Stomach (tissue), 19 donors: ENCODE measurements at regions of chr15 and their contacts with region 1.

Region 1: DNA sequence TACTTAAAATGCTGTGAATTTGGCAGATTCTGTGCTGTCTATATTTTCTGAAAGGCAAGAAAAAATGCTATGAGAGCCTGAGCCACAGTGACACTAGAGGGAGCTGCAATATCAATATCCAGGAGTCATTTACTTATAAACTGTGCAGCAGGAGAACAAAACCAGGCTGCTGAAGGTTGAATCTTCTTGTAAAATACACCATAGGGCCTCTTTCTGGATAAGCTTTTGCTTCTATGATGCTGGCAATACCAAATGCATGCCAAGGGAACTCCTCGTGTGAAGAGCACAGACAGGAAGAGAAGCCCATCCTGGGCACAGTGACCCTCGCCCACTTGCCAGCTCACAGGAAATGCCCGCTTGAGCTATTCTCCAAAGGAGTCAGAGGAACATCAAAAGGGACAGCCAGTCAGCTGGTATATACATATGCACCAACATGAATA is 48.0 kb upstream of the TSPAN3 start:
- DNase-seq: peak; percentile 40 to 91
- H3K4me3 ChIP-seq: no peak overlapping the region
- H3K27ac ChIP-seq: no peak overlapping the region
- H3K4me1 ChIP-seq: peaks cover 5 to 11% (median 6%) of the 10 kb centered on the region in 4 donors
- H3K27me3 ChIP-seq: no peaks in the 10 kb centered on the region
- CTCF ChIP-seq: peak in 5 of 7 experiments; percentile 48 to 76 (median 61)
- EP300 ChIP-seq: no peak
- POLR2A ChIP-seq: no peak

Region 2: GRCh38 chr15:77168616-77169015 is 49.7 kb after region 1 on chr15:
- intact Hi-C with region 1: no loop called
- DNase-seq: no peak
- H3K4me3 ChIP-seq: no peak overlapping the region
- H3K27ac ChIP-seq: no peak overlapping the region
- H3K4me1 ChIP-seq: peaks cover 3 to 16% (median 8%) of the 10 kb centered on the region in 4 donors
- H3K27me3 ChIP-seq: no peaks in the 10 kb centered on the region
- CTCF ChIP-seq: no peak
- EP300 ChIP-seq: no peak
- POLR2A ChIP-seq: no peak

Region 3: DNA sequence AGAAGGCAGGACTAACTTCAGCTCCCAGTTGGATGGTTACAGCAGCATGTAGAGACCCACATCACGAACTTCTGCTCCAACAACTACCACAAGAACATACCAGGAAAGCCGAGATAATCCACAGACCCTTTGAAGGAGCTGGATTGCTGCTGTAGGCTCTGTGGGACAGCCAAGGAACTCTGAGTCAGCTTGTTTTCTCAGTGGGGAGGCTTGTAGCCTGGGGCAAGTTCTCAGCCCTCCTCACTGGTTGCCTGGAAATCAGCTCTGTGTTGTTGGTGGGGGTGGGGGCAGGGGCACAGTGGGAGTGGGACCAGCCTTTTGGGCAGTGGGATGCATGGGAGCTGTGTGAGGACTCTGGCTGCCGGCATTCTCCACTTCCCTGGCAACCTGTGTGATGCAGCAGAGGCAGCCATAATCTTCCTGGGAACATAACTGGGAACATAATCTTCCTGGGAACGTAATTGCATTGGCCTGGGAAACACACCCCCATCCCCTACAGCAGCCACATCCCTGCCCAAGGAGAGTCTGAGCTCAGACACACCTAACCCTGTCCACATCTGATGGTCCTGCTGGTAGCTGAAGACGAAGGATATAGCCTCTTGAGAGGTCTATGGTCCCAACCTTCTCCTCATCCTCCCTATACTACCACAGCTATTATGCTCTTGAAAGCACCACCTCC is 147.9 kb after region 1 on chr15:
- intact Hi-C with region 1: no loop called
- DNase-seq: no peak
- H3K4me3 ChIP-seq: no peak overlapping the region
- H3K27ac ChIP-seq: no peak overlapping the region
- H3K4me1 ChIP-seq: no peaks in the 10 kb centered on the region
- H3K27me3 ChIP-seq: no peaks in the 10 kb centered on the region
- CTCF ChIP-seq: no peak
- EP300 ChIP-seq: no peak
- POLR2A ChIP-seq: no peak

Region 4: DNA sequence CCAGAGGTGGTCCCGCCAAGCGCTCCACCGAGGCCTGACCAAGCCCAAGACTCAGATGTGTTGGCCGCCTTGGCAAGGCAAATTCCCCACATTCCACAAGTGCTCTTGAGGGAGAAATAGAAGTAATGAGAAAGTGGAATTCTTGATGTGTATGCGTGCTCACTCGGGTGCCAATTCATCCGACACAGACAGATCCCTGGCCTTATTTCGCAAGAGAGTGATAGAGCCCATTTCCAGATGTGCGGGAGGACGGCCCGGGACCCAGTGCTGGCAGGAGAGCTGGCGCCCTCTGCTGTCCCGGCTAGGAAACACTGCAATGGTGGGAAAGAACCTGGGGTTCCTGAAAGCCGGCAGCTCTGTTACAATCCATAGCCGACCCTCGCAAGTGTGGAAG is 377.8 kb after region 1 on chr15:
- intact Hi-C with region 1: loop called (anchors 10 kb)
- DNase-seq: peak; percentile 80 to 93
- H3K4me3 ChIP-seq: peak overlapping the region in 2 of 4 donors; percentile 1 to 5
- H3K27ac ChIP-seq: peak overlapping the region in 4 of 5 donors; percentile 55 to 76 (median 72)
- H3K4me1 ChIP-seq: peaks cover 22 to 52% (median 37%) of the 10 kb centered on the region in 4 donors
- H3K27me3 ChIP-seq: no peaks in the 10 kb centered on the region
- CTCF ChIP-seq: peak in 5 of 7 experiments; percentile 76 to 89 (median 81)
- EP300 ChIP-seq: no peak
- POLR2A ChIP-seq: no peak